ENCODE measurements at regions of chr3 and their contacts with region 1.

Region 1: DNA sequence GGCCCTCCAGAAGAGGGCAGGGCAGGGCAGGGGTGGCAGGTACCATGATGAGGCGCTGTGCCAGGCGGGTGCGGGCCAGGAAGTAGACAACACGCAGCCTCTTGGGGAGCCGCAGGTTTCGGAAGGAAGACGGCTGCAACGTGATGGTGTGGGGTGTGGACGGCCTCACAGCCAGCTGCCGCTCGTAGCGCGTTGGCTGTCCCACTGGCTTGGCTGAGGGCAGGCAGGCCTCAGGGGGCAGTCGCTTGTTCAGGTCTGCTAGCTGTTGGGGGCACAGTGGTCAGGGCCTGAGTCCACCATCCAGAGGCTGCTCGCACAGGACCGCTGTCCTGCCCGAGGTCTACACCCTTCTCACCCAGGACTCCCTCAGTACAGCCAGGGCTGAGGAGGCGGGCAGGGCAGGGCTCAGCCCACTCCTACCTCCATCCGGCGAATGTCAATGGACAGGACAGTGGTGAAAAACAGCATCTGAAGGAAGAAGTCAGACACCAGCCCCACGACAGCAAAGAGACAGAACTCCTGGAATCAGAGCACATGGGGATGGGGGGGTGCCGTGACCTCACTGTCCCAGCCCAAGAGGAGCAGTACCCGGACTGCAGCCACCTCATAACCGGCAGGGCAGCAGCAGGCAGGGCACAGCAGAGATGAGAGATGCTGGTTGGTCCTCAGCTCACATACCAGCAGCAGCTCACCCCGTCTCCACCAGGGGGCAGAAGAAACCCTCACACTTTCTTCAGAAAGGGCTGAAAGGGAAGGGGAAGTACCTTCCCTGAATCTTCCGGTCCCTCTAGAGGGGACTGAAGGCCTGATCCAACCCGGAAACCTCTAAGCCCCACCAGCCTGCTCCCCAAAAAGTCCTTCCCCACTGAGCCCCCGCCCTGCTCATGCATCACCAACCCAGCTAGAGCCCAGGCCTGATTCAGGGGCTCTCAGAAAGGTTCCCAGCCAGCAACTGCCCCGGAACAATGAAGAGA is 40.0 kb downstream of the PTPN23 start:
- DNase-seq: peak; percentile 92 to 95 (median 93)
- H3K4me3 ChIP-seq: peak overlapping the region in 3 of 7 experiments; percentile 26 to 40 (median 35)
- H3K27ac ChIP-seq: peak overlapping the region; percentile 40 to 69
- H3K4me1 ChIP-seq: peaks cover 0 to 18% (median 8%) of the 10 kb centered on the region in 4 experiments
- H3K27me3 ChIP-seq: no peaks in the 10 kb centered on the region

Region 2: GRCh38 chr3:47377186-47377585 is 43.6 kb before region 1 on chr3:
- CTCF ChIA-PET with region 1: no interaction called
- POLR2A ChIA-PET with region 1: no interaction called
- DNase-seq: no peak
- H3K4me3 ChIP-seq: no peak overlapping the region
- H3K27ac ChIP-seq: no peak overlapping the region
- H3K4me1 ChIP-seq: peaks cover 7 to 34% (median 27%) of the 10 kb centered on the region in 4 experiments
- H3K27me3 ChIP-seq: no peaks in the 10 kb centered on the region

Region 3: GRCh38 chr3:47475570-47476329 is 55.0 kb after region 1 on chr3 and contains the start of gene SCAP:
- CTCF ChIA-PET with region 1: interaction called, 63 read pairs
- POLR2A ChIA-PET with region 1: no interaction called
- DNase-seq: peak; percentile 83 to 90 (median 90)
- H3K4me3 ChIP-seq: peak within 1 kb of the TSS; percentile 80 to 96 (median 88)
- H3K27ac ChIP-seq: peak within 1 kb of the TSS; percentile 46 to 85
- H3K4me1 ChIP-seq: peaks cover 0 to 19% (median 19%) of the 10 kb centered on the region in 4 experiments
- H3K27me3 ChIP-seq: no peaks in the 10 kb centered on the region

Region 4: DNA sequence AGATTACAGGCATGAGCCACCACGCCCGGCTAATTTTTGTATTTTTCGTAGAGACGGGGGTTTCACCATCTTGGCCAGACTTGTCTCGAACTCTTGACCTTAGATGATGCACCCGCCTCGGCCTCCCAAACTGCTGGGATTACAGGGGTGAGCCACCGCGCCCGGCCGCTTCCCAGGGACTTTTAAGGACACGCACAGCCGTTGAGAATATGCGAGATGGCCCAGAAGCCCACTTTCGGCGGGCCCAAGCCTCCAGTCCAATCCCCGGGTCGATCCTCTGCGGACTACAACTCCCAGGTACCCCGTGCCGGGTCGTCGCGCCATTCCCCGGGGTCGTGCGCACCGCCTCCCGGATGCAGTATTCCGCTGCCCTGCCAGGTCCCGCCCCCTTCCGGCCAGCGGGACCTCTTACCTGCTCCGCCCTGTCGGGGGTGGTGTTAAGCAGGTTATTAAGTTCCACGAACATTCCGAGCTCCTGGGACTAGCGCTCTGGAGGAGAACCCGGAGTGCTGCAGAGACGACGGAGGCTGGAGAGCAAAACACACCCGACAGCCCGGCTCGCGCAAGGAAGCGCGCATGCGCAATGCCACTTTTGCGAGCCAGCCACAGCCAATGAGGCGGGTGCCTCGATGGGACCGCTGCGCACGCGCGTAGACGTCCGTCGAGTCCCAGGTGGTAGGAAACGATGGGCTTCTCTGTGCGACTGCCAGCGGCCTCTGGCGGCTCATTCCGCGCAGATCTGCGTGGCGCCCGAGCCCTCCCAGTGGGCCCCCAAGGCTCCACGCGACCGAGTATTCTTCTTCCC is 92.5 kb after region 1 on chr3 and contains the start of gene ELP6:
- CTCF ChIA-PET with region 1: interaction called, 11 read pairs
- POLR2A ChIA-PET with region 1: no interaction called
- DNase-seq: peak; percentile 95 to 98 (median 98)
- H3K4me3 ChIP-seq: peak within 1 kb of the TSS; percentile 66 to 98 (median 90)
- H3K27ac ChIP-seq: peak within 1 kb of the TSS; percentile 70 to 87
- H3K4me1 ChIP-seq: peaks cover 3 to 15% (median 9%) of the 10 kb centered on the region in 4 experiments
- H3K27me3 ChIP-seq: no peaks in the 10 kb centered on the region